SK-N-SH (cell line): ENCODE measurements at regions of chr20 and their contacts with region 1.

Region 1: DNA sequence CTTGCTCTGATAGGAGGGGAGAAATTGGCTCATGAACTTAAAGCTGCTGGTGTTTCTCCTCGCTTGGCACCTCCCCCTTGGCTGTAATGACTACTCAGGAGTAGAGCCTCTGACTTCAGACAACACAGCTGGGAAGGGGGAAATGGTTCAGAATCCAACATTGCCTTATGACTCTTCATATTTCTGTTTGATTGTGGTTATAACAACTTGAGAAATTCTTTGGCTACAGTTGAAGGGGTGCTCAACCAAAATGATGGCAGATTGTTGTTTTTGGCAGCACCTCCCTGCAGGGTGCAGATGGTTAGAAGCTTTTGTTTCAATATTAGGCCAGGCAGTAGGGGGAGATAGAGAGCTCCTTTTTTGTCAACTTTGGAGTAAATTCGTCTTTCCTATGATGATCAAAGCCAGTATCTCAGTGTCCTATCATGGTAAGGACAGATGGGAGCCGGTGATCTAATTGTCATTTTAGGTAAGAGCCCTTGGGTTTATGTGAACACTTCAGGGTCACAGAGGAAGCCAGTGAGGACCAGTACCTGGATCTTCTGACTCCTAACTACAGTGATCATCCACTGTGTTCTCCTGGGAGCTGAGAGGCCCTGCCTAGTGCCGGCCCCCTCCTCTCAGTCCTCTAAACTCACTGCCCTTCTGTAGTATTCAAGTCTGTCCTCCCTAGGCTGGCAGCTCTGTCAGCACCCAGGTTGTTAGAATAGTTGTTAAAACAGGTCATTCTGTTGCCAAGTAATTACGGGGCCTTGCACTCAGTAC is 39.9 kb downstream of the RPRD1B start:
- DNase-seq: peak; percentile 52
- H3K4me3 ChIP-seq: no peak overlapping the region; a peak in 1 of 4 replicates
- H3K27ac ChIP-seq: peak overlapping the region; percentile 36 to 78
- H3K4me1 ChIP-seq: peaks cover 10 to 22% of the 10 kb centered on the region in 2 experiments; a peak in 3 of 4 replicates
- H3K27me3 ChIP-seq: no peaks in the 10 kb centered on the region
- CTCF ChIP-seq: peak; percentile 81
- EP300 ChIP-seq: no peak
- RAD21 ChIP-seq: peak; percentile 70

Region 2: DNA sequence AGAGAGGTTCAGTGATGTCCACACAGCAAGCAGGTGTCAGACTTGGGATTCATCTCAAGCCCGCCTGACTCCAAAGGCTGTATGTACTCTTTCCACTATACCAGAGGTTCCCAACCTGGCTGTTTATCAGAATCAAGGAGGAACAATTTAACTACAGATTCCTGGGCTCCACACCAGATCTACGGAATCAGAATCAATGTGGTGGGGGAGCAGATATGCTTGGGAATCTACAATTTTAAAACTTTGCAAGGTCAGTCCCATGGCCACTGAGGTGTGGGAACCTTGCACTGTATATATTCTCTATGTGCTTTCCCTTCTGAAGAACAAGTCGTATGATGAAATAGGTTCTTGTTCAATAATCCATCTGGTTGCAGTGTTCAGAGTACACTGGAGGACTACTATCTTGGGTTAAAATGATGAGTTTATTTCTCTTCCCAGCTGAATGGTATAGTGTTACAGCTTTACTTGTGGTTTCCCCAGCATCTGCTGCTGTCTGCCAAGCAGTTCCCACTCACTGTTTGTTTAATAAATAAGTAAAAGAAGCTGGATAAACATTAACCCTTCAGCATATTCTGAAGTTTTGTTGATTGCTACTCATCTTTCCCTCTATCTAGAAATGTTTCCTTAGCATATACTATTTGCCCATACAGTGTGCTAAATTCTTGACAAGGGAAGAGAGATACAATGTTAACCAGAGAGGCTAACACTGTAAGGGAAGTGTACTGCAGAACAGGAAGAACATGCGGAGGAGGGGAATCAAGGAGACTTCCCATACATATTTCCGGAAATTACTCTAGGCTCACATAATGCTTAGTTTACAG is 50.1 kb before region 1 on chr20:
- CTCF ChIA-PET with region 1: no interaction called
- POLR2A ChIA-PET with region 1: no interaction called
- DNase-seq: no peak
- H3K4me3 ChIP-seq: no peak overlapping the region
- H3K27ac ChIP-seq: no peak overlapping the region
- H3K4me1 ChIP-seq: no peaks in the 10 kb centered on the region; a peak in 2 of 4 replicates
- H3K27me3 ChIP-seq: no peaks in the 10 kb centered on the region
- CTCF ChIP-seq: no peak
- EP300 ChIP-seq: no peak
- RAD21 ChIP-seq: no peak

Region 3: GRCh38 chr20:38094373-38094891 is 20.9 kb after region 1 on chr20:
- CTCF ChIA-PET with region 1: interaction called, 118 read pairs
- POLR2A ChIA-PET with region 1: no interaction called
- DNase-seq: no peak
- H3K4me3 ChIP-seq: no peak overlapping the region
- H3K27ac ChIP-seq: peak overlapping the region; percentile 69 to 75
- H3K4me1 ChIP-seq: peaks cover 16 to 38% of the 10 kb centered on the region in 2 experiments
- H3K27me3 ChIP-seq: no peaks in the 10 kb centered on the region
- CTCF ChIP-seq: no peak
- EP300 ChIP-seq: peak in 1 of 2 experiments; percentile 27; a peak in 1 of 4 replicates
- RAD21 ChIP-seq: no peak

Region 4: GRCh38 chr20:38134387-38135270 is 61.1 kb after region 1 on chr20:
- CTCF ChIA-PET with region 1: interaction called, 13 read pairs
- POLR2A ChIA-PET with region 1: interaction called, 4 read pairs
- DNase-seq: peak; percentile 69
- H3K4me3 ChIP-seq: no peak overlapping the region
- H3K27ac ChIP-seq: peak overlapping the region; percentile 82 to 84
- H3K4me1 ChIP-seq: peaks cover 16 to 43% of the 10 kb centered on the region in 2 experiments
- H3K27me3 ChIP-seq: no peaks in the 10 kb centered on the region
- CTCF ChIP-seq: no peak
- EP300 ChIP-seq: peak; percentile 59 to 92; a peak in 3 of 4 replicates
- RAD21 ChIP-seq: no peak; the same call in 1 of the 2 replicates

Region 5: GRCh38 chr20:38152621-38153231 is 79.2 kb after region 1 on chr20:
- CTCF ChIA-PET with region 1: interaction called, 21 read pairs
- POLR2A ChIA-PET with region 1: no interaction called
- DNase-seq: peak; percentile 91
- H3K4me3 ChIP-seq: no peak overlapping the region
- H3K27ac ChIP-seq: peak overlapping the region; percentile 86 to 98
- H3K4me1 ChIP-seq: peaks cover 30 to 33% of the 10 kb centered on the region in 2 experiments
- H3K27me3 ChIP-seq: no peaks in the 10 kb centered on the region
- CTCF ChIP-seq: no peak
- EP300 ChIP-seq: peak; percentile 40 to 47; a peak in 2 of 4 replicates
- RAD21 ChIP-seq: no peak

Region 6: DNA sequence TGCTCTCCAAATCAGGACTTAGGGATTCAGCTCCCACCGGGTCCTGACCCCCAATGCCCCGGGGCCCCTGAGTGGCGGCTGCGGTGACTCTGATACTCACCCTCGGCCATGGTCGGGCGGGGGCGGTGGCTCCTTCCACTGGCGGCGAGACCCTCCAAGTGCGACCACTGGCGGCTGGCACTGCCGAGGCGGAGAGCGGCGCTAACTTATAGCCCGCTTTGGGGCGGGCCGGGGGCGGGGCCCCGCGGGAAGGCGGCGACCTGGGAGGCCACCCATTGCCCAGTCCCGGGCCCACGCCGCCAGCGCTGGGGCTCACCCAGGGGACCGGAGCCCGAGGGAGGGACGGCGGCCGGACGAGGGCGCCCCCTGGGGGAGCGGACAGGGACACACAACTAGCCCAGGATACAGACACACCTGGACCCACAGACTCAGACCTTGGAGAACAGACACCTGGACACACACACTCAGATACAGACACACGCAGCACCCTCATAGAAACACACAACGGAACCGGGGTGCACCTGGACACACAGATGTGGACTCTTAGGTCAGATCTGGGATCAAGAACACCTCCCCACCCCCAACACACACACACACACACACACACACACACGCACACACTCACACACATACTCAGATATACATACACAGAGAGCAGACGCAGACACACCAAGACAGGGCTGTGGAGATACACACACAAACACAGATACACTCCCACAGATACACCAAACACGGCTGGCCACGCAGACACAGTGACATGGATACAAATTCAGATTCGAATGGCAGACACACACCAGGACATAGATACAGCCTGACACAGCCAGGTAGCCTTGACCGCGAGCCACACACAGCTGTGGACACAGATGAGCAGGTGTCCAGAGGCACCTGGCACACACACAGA is 91.8 kb after region 1 on chr20 and contains the start of gene TGM2:
- CTCF ChIA-PET with region 1: interaction called, 20 read pairs
- POLR2A ChIA-PET with region 1: no interaction called
- DNase-seq: peak; percentile 92
- H3K4me3 ChIP-seq: peak within 1 kb of the TSS; percentile 58 to 77
- H3K27ac ChIP-seq: peak within 1 kb of the TSS in 1 of 2 experiments; percentile 58; a peak in 3 of 4 replicates
- H3K4me1 ChIP-seq: peaks cover 35 to 36% of the 10 kb centered on the region in 2 experiments; a peak in 3 of 4 replicates
- H3K27me3 ChIP-seq: no peaks in the 10 kb centered on the region
- CTCF ChIP-seq: peak; percentile 87
- EP300 ChIP-seq: no peak
- RAD21 ChIP-seq: peak; percentile 81
- polyA plus RNA-seq, gene TGM2: 548 and 676 TPM in 2 replicates

Region 7: GRCh38 chr20:38418509-38419204 is 345.2 kb after region 1 on chr20:
- CTCF ChIA-PET with region 1: no interaction called
- POLR2A ChIA-PET with region 1: no interaction called
- DNase-seq: no peak
- H3K4me3 ChIP-seq: no peak overlapping the region
- H3K27ac ChIP-seq: peak overlapping the region in 1 of 2 experiments; percentile 12; a peak in 2 of 4 replicates
- H3K4me1 ChIP-seq: peaks cover 0 to 6% of the 10 kb centered on the region in 2 experiments; a peak in 1 of 4 replicates
- H3K27me3 ChIP-seq: no peaks in the 10 kb centered on the region
- CTCF ChIP-seq: no peak
- EP300 ChIP-seq: no peak
- RAD21 ChIP-seq: no peak